Calu3 (cell line): ENCODE measurements at regions of chr1 and their contacts with region 1.

Region 1: GRCh38 chr1:45011837-45012638 is at the start of gene UROD:
- DNase-seq: peak; percentile 87
- H3K4me3 Mint-ChIP-seq: peak within 1 kb of the TSS; percentile 94
- H3K27ac Mint-ChIP-seq: peak within 1 kb of the TSS; percentile 58
- H3K4me1 Mint-ChIP-seq: peaks cover 18% of the 10 kb centered on the region
- H3K27me3 Mint-ChIP-seq: no peaks in the 10 kb centered on the region
- CTCF ChIP-seq: no peak
- total RNA-seq, gene UROD: 40.4 and 50.3 TPM in 2 replicates

Region 2: DNA sequence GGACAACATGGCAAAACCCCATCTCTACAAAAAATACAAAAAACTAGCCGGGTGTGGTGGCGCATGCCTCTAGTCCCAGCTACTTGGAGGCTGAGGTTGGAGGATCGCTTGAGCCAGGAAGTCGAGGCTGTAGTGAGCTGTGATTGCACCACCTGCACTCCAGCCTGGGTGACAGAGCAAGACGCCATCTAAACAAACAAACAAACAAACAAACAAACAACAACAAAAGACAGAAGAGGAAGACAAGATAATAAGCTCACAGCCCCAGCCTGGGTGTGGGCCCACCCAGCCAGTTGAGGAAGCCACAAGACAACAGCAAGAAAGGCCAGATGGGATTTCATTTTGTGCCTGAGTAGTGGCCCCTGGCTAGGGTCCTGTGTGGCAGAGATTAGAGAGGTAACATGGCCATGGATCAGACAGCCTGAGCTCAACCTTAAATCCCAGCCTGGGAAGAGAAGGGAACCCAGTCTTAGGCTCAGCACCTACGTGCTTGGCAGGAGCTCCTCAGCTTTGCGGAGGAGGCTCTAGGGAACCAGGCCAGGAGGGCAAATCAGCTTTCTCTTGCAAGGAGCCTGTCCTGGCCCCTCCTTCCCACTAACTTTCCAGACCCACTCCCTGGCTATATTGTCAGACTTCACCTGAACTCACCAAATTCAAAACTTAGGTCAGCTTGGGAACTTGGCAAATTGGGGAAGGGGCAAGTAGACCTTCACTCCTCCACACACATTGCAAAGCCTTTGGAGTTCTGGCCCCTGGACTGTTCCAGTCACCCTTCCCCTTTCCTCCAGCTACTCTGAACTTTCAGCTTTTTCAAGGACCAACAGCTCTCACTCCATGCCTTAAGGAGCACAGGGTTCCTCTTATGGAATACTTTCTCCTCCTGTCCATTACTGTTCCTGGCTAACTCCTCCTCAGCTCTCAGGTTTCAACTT is 219.0 kb before region 1 on chr1:
- CTCF ChIA-PET with region 1: interaction called, 13 read pairs
- intact Hi-C with region 1: loop called (anchors 5 kb)
- DNase-seq: no peak
- H3K4me3 Mint-ChIP-seq: no peak overlapping the region
- H3K27ac Mint-ChIP-seq: no peak overlapping the region
- H3K4me1 Mint-ChIP-seq: peaks cover 8% of the 10 kb centered on the region
- H3K27me3 Mint-ChIP-seq: no peaks in the 10 kb centered on the region
- CTCF ChIP-seq: no peak

Region 3: GRCh38 chr1:44835738-44836675 is 176.0 kb before region 1 on chr1:
- CTCF ChIA-PET with region 1: no interaction called
- intact Hi-C with region 1: loop called (anchors 5 kb)
- DNase-seq: peak; percentile 91
- H3K4me3 Mint-ChIP-seq: no peak overlapping the region
- H3K27ac Mint-ChIP-seq: no peak overlapping the region
- H3K4me1 Mint-ChIP-seq: no peaks in the 10 kb centered on the region
- H3K27me3 Mint-ChIP-seq: no peaks in the 10 kb centered on the region
- CTCF ChIP-seq: peak; percentile 85

Region 4: DNA sequence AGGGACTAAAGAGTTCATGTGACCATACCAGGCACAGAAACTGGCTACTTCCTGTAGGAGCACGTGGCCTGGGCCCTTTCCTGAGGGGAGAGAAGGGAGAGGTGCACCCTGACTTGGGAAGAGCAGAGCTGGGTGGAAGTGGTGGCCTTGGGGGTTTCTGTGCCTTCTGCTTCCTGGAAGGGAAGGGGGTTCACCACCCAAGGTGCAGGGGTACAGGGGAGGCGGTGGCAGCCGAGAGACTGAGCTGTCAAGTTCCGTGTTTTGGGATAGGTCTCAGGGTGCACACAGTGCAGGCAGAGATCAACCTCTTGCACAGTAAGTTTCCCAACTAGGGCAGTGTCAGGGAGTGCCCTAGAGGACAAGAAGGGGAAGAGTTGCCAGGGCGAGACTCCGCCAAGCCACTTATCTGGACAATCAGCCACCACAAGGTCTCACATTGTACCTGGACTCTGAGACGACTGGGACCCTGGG is 11.0 kb before region 1 on chr1:
- CTCF ChIA-PET with region 1: interaction called, 11 read pairs
- intact Hi-C with region 1: no loop called
- DNase-seq: no peak
- H3K4me3 Mint-ChIP-seq: no peak overlapping the region
- H3K27ac Mint-ChIP-seq: no peak overlapping the region
- H3K4me1 Mint-ChIP-seq: no peaks in the 10 kb centered on the region
- H3K27me3 Mint-ChIP-seq: no peaks in the 10 kb centered on the region
- CTCF ChIP-seq: no peak

Region 5: GRCh38 chr1:45230540-45230939 is 218.5 kb after region 1 on chr1:
- CTCF ChIA-PET with region 1: no interaction called
- intact Hi-C with region 1: loop called (anchors 1 kb)
- DNase-seq: peak; percentile 15
- H3K4me3 Mint-ChIP-seq: no peak overlapping the region
- H3K27ac Mint-ChIP-seq: no peak overlapping the region
- H3K4me1 Mint-ChIP-seq: no peaks in the 10 kb centered on the region
- H3K27me3 Mint-ChIP-seq: peaks cover 11% of the 10 kb centered on the region
- CTCF ChIP-seq: no peak

Region 6: DNA sequence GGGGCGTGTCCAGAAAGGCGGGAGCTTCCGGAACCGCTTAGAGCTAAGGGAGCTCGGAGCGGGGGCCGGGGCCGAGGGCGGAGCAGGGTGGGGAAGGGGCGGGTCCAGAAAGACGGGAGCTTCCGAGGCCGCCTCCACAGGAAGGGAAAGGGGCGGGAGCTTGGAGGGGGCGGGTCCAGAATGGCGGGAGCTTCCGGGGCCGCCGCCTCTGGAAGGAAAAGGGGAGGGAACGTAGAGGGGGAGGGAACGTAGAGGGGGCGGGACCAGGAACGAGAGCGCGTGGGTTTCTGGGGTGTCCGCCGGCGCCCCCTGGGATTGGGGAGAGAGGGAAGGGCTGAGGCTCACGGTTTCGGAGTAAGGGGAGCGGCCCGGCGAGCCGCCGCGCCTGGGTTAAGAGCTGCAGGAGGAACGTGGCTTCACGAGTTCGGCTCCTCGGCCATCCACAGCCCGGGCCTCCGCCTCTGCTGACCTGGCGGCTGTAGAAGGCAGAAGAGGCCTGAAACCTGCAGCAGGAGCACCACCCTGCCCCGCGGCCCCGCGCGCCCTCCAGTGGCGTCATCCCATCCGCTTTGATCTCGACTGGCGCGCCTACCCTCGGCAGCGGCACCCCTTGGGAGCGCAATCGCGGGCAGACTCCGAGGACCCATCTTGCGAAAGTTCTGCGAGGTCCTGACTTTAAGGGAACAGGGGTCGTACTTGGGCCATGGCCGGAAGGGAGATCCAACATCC is 291.7 kb after region 1 on chr1:
- CTCF ChIA-PET with region 1: interaction called, 22 read pairs
- intact Hi-C with region 1: no loop called
- DNase-seq: peak; percentile 94
- H3K4me3 Mint-ChIP-seq: peak overlapping the region; percentile 81
- H3K27ac Mint-ChIP-seq: peak overlapping the region; percentile 78
- H3K4me1 Mint-ChIP-seq: peaks cover 8% of the 10 kb centered on the region
- H3K27me3 Mint-ChIP-seq: no peaks in the 10 kb centered on the region
- CTCF ChIP-seq: peak; percentile 70

Region 7: DNA sequence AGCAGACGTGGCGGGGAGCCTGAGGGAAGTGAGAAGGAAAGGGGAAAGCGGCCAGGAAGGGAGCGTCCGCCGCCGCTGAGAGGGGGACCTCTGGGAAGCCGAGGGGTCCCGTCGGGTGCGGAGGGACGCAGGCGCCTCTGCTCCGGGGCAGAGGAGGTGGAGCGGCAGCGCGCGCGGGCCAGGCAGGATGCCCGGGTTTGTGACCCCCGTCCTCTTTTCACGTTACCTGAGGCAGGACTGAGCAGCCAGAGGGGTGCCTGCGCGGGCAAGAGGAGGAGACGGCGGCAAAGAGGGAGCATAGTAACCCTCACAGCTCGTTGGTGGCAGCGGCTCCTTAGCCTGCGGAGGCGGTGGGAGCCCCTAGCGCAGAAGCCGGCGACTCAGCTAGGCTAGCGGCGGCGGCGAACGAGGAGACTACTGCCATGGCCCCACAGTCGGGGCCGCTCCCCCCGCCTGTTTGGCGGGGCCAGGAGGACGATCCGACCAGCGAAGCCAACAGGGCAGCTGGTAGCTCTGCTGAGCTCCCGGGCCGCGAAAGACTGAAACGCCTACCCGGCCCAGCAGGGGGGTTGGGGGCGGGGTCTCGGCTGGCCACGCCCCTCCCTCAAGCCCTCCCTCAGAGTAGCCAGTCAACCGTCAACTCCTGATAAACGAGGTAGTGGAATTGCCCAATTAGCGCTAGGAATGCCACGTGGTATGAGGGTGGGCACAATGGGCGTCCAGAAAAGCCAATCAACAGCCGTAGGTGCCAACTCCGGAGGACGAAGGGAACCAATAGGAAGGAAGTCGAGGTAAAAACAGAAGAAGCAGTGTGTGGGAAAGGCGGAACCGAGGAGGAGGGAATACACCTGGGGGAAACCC is 478.8 kb after region 1 on chr1 and contains the start of gene TESK2:
- CTCF ChIA-PET with region 1: interaction called, 9 read pairs
- intact Hi-C with region 1: loop called (anchors 5 kb)
- DNase-seq: peak; percentile 98
- H3K4me3 Mint-ChIP-seq: no peak within 1 kb of the TSS
- H3K27ac Mint-ChIP-seq: no peak within 1 kb of the TSS
- H3K4me1 Mint-ChIP-seq: no peaks in the 10 kb centered on the region
- H3K27me3 Mint-ChIP-seq: no peaks in the 10 kb centered on the region
- CTCF ChIP-seq: no peak
- total RNA-seq, gene TESK2: 1.8 and 2.3 TPM in 2 replicates